BJ (cell line): ENCODE measurements at regions of chr11 and their contacts with region 1.

Region 1: GRCh38 chr11:125404776-125405435 is 91.2 kb downstream of the FEZ1 start:
- DNase-seq: no peak
- H3K4me3 ChIP-seq: no peak overlapping the region
- H3K27me3 ChIP-seq: peaks cover 27% of the 10 kb centered on the region
- CTCF ChIP-seq: peak; percentile 98

Region 2: DNA sequence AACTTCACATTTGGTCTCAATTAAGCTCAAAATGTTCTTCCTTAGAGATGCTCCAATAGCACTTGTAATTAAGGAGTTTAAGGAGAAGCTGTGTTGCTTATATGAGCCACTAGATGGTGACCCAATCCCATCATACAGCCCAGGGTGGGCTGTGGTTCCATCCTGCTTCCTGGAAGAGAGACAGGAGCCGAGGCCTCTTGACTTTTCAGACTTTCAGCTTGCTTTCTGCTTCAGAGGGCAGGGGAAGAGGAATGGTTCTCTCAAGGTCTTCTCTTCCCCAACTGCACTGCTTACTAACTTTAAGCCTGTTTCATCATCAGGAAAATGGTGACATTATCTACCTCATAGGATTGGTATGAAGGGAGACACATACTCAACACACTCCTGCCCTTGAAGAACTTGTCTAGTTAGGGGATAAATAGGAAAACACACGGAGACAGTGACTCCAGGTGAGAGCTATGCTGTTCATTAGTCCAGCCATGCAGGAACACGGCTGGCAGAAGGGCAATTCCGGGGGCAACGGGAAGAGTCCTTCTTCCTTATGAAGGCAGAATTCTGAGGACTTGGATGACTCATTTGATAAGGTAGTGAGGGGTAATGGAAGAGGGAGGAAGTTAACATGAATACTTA is 313.5 kb before region 1 on chr11:
- CTCF ChIA-PET with region 1: interaction called, 20 read pairs
- POLR2A ChIA-PET with region 1: no interaction called
- DNase-seq: no peak
- H3K4me3 ChIP-seq: no peak overlapping the region
- H3K27me3 ChIP-seq: no peaks in the 10 kb centered on the region
- CTCF ChIP-seq: peak; percentile 62

Region 3: GRCh38 chr11:125351033-125351867 is 53.7 kb before region 1 on chr11:
- CTCF ChIA-PET with region 1: interaction called, 36 read pairs
- POLR2A ChIA-PET with region 1: no interaction called
- DNase-seq: no peak
- H3K4me3 ChIP-seq: no peak overlapping the region
- H3K27me3 ChIP-seq: peaks cover 5% of the 10 kb centered on the region
- CTCF ChIP-seq: no peak

Region 4: DNA sequence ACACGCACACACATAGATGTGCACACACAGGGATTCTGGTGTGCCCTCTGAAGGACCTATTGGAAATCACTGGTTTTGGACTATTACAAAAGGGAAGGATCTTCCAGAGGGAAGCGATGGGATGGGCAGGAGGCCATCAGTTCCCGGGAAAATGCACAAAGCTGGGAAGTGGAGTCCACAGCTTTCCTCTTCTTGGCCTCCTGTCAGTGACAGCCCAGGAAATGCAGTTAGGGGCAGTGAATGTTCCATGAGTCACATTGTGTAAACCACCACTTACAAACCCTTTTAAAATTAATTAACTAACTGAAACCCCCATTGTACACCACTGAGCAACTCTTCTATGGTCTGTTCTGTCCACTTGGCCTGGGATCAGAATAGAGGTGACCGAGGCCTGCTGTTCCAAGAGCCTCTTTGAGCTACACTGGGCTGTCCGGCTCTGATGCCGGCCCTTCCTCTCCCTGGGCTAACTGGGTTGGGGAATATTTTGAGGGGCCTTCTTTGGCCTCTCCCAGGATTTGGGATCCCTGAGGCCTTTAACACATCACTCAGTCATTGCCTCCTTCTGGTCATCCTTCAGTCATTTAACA is 46.6 kb before region 1 on chr11:
- CTCF ChIA-PET with region 1: interaction called, 33 read pairs
- POLR2A ChIA-PET with region 1: no interaction called
- DNase-seq: no peak
- H3K4me3 ChIP-seq: no peak overlapping the region
- H3K27me3 ChIP-seq: no peaks in the 10 kb centered on the region; the same call in 1 of the 2 replicates
- CTCF ChIP-seq: no peak

Region 5: GRCh38 chr11:125390946-125391345 is 14.0 kb before region 1 on chr11:
- CTCF ChIA-PET with region 1: interaction called, 17 read pairs
- POLR2A ChIA-PET with region 1: no interaction called
- DNase-seq: peak; percentile 32
- H3K4me3 ChIP-seq: no peak overlapping the region
- H3K27me3 ChIP-seq: no peaks in the 10 kb centered on the region
- CTCF ChIP-seq: no peak

Region 6: DNA sequence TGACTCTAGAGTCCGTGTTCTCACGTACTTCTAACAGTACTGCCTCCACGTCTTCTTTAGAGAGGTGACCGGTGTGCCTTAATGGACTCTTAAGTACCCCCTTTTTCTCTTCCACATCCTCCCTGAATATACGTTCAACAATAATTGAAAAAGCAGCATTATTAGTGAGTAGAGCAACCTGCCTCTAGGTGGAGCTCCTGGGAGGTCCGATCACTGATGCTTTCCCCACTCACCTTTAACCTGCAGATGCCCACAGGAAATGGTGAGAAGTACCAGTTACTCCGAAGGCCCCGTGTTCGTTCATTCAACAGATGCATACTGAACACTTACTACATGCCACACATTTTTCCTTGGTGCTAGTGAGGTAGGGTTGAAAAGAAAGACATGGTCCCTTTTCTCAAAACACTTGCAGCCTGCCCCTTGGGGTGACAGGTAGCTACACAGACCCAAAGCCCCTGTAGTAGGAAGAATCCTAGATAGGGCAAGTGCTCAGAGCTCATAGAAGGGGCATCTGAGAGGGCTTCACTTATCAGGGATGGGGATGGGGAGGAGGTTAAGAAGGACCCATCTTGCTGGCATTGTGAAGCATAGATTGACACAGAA is 18.4 kb after region 1 on chr11:
- CTCF ChIA-PET with region 1: interaction called, 13 read pairs
- POLR2A ChIA-PET with region 1: no interaction called
- DNase-seq: no peak
- H3K4me3 ChIP-seq: no peak overlapping the region
- H3K27me3 ChIP-seq: peaks cover 10% of the 10 kb centered on the region
- CTCF ChIP-seq: peak; percentile 34; the same call in 1 of the 2 replicates

Region 7: DNA sequence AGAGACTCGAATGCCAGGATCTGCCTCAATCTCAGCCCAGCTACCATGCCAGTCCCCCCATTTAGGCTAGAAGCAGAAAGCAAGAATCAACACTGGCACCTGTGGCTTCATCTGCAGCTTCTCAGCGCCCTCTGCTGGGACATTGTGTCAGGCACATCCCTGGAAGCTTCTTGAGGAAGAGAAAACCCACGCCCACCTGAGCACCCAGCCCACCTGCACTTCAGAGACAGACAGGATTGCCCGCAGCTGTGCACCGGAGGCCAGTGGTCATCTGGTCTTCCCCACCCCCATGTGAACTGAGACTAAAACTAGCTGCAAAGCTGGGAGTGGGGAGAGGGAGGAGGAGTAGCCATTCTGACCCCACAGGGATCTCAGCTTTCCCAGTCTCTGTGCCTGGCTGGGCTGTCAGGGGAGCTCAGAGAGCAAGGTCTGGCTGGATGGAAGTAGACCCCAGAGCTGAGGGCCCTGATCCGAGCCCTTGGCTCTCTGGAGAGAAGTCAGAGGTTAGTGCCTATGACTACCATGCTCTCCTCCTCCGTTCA is 24.3 kb after region 1 on chr11:
- CTCF ChIA-PET with region 1: interaction called, 14 read pairs
- POLR2A ChIA-PET with region 1: no interaction called
- DNase-seq: no peak
- H3K4me3 ChIP-seq: no peak overlapping the region
- H3K27me3 ChIP-seq: peaks cover 10% of the 10 kb centered on the region
- CTCF ChIP-seq: peak; percentile 83